Heart right ventricle (tissue), 16 donors: ENCODE measurements at regions of chr16 and their contacts with region 1.

Region 1: DNA sequence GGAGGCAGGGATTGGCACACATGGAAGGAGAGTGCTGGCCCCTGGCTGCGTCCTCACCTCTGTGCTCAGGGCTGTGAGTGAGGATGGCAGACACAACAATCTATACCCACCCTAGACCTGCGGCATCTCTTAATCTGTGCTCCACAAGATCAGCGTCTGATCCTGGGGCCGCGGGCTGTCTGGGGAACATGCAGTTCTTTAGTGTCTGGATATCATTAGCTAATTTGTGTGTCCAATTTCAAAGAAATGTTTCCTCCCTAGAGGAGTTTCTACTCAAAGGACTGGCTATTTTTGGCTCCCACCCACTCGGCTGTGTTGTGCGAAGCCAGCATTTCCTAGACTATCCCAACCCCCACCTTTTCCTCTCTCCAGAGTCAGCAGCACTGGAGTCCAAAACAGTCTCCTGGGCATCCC is 93.8 kb downstream of the GRIN2A start:
- DNase-seq: peak in 1 of 2 donors; percentile 19
- ATAC-seq: peak in 7 of 8 donors; percentile 42 to 75 (median 63)
- H3K4me3 ChIP-seq: no peak overlapping the region
- H3K27ac ChIP-seq: no peak overlapping the region
- H3K4me1 ChIP-seq: peaks cover 0 to 30% (median 7%) of the 10 kb centered on the region in 9 donors
- H3K27me3 ChIP-seq: peaks cover 0 to 3% (median 0%) of the 10 kb centered on the region in 7 donors
- CTCF ChIP-seq: peak in 1 of 9 donors; percentile 5

Region 2: GRCh38 chr16:10136916-10137315 is 48.5 kb after region 1 on chr16:
- intact Hi-C with region 1: loop called in 1 of 10 experiments (anchors 5 kb)
- DNase-seq: no peak
- ATAC-seq: no peak
- H3K4me3 ChIP-seq: no peak overlapping the region
- H3K27ac ChIP-seq: no peak overlapping the region
- H3K4me1 ChIP-seq: no peaks in the 10 kb centered on the region
- H3K27me3 ChIP-seq: peaks cover 0 to 6% (median 0%) of the 10 kb centered on the region in 7 donors
- CTCF ChIP-seq: no peak